AG04450 (cell line): ENCODE measurements at regions of chr10 and their contacts with region 1.

Region 1: DNA sequence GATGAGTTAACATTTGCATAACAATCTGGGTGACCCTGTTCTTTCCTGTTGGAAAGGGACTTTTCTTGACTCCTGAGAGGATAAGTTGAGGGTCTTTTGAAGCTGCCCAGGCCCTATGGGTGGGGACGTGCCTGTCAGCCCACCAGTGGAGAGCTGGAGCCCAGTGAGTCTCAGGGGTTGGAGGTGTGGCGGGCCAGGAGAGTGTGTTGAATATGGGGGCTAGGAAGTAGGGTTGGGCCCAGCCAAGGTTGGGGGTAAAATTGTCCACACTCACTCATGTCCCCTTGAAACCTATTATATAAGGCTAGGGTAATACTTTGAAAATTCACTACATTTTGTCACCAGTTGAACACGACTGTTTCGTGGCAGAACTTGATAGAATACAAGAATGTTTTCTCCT is 17.9 kb upstream of the KAT6B start:
- DNase-seq: no peak
- H3K4me3 ChIP-seq: no peak overlapping the region
- H3K27ac ChIP-seq: no peak overlapping the region
- H3K27me3 ChIP-seq: no peaks in the 10 kb centered on the region
- CTCF ChIP-seq: no peak

Region 2: GRCh38 chr10:74071157-74071556 is 737.3 kb before region 1 on chr10:
- CTCF ChIA-PET with region 1: no interaction called
- POLR2A ChIA-PET with region 1: interaction called, 14 read pairs
- DNase-seq: peak; percentile 82
- H3K4me3 ChIP-seq: no peak overlapping the region
- H3K27ac ChIP-seq: peak overlapping the region; percentile 68
- H3K27me3 ChIP-seq: no peaks in the 10 kb centered on the region
- CTCF ChIP-seq: no peak

Region 3: DNA sequence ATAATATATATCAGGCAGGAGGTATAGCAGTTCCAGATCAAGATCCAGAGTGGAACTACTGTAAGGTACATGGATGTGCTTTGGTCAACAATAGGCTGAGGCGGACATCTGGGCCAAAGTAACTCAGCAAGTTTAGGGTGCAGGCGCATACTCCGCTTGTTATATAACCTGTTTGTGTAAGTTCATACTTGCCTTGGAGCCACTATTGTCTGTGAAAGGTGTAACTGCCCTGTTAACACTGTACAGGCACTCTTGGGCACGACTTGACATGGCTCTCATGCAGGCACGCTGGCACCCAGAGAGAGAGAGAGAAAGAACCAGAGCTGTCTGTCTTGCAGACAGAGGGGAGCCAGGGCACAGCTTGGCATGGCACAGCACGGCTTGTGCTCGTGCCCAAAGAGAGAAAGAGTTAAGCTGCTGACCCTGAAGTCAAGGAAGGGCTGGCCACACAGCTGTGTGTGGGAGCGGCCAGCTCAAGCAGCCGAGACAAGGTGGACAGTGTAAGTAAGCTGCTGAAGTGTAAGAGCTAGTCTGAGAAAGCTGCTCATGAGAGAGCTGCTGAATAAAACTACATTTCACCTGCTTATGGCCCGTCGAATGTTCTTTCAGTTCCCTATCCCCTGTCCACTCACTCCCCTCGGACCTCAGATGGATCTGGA is 29.9 kb before region 1 on chr10:
- CTCF ChIA-PET with region 1: no interaction called
- POLR2A ChIA-PET with region 1: no interaction called
- DNase-seq: no peak
- H3K4me3 ChIP-seq: no peak overlapping the region
- H3K27ac ChIP-seq: no peak overlapping the region
- H3K27me3 ChIP-seq: peaks cover 2% of the 10 kb centered on the region
- CTCF ChIP-seq: no peak